ENCODE measurements at regions of chr1 and their contacts with region 1.

Region 1: DNA sequence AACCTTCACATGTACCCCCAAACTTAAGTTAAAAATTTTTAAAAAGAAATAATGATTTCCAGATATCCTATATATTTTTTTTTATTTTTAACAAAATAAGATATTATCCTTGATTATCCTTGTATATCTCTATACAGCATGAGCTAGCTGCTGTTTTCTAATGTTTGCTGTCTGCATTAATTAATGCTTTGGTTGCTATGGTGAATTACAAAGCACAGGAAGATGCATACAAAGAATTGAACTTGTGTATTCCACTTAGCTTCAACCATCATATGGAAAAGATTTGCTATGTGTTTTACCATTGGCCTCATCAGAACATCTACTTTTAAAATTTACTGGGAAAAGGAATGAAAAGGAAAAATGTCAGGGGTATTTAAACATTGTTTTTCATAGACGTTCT is 35.4 kb downstream of the VPS45 start:
- DNase-seq: peak in 1 of 35 experiments; percentile 29
- ATAC-seq: no peak
- H3K4me3 ChIP-seq: no peak overlapping the region
- H3K4me3 Mint-ChIP-seq: no peak overlapping the region
- H3K27ac ChIP-seq: no peak overlapping the region
- H3K27ac Mint-ChIP-seq: peak overlapping the region; percentile 64 to 69
- H3K4me1 ChIP-seq: peaks cover 19 to 39% of the 10 kb centered on the region in 2 experiments
- H3K4me1 Mint-ChIP-seq: peaks cover 57 to 66% (median 58%) of the 10 kb centered on the region in 3 donors
- H3K27me3 ChIP-seq: no peaks in the 10 kb centered on the region
- H3K27me3 Mint-ChIP-seq: no peaks in the 10 kb centered on the region

Region 2: GRCh38 chr1:148347781-148348180 is 1755.2 kb before region 1 on chr1:
- CTCF ChIA-PET with region 1: no interaction called
- POLR2A ChIA-PET with region 1: no interaction called
- DNase-seq: no peak
- ATAC-seq: no peak
- H3K4me3 ChIP-seq: no peak overlapping the region
- H3K4me3 Mint-ChIP-seq: no peak overlapping the region
- H3K27ac ChIP-seq: no peak overlapping the region
- H3K27ac Mint-ChIP-seq: no peak overlapping the region
- H3K4me1 ChIP-seq: no peaks in the 10 kb centered on the region
- H3K4me1 Mint-ChIP-seq: peaks cover 2 to 6% (median 5%) of the 10 kb centered on the region in 3 donors
- H3K27me3 ChIP-seq: peaks cover 3 to 28% of the 10 kb centered on the region in 2 experiments
- H3K27me3 Mint-ChIP-seq: peaks cover 26 to 61% of the 10 kb centered on the region in 2 donors

Region 3: GRCh38 chr1:150149271-150150132 is 46.5 kb after region 1 on chr1 and contains the start of gene PLEKHO1:
- CTCF ChIA-PET with region 1: interaction called in 1 of 2 experiments, 6 read pairs
- POLR2A ChIA-PET with region 1: interaction called, 3 to 11 read pairs
- DNase-seq: peak; percentile 59 to 88 (median 74)
- ATAC-seq: peak; percentile 73 to 76 (median 75)
- H3K4me3 ChIP-seq: peak within 1 kb of the TSS; percentile 87 to 93
- H3K4me3 Mint-ChIP-seq: peak within 1 kb of the TSS; percentile 91 to 98 (median 95)
- H3K27ac ChIP-seq: peak within 1 kb of the TSS; percentile 88
- H3K27ac Mint-ChIP-seq: peak within 1 kb of the TSS; percentile 98 to 99
- H3K4me1 ChIP-seq: peaks cover 17 to 51% of the 10 kb centered on the region in 2 experiments
- H3K4me1 Mint-ChIP-seq: peaks cover 70 to 74% (median 71%) of the 10 kb centered on the region in 3 donors
- H3K27me3 ChIP-seq: no peaks in the 10 kb centered on the region
- H3K27me3 Mint-ChIP-seq: no peaks in the 10 kb centered on the region
- total RNA-seq, gene PLEKHO1: 68.9 to 183 (median 154) TPM

Region 4: DNA sequence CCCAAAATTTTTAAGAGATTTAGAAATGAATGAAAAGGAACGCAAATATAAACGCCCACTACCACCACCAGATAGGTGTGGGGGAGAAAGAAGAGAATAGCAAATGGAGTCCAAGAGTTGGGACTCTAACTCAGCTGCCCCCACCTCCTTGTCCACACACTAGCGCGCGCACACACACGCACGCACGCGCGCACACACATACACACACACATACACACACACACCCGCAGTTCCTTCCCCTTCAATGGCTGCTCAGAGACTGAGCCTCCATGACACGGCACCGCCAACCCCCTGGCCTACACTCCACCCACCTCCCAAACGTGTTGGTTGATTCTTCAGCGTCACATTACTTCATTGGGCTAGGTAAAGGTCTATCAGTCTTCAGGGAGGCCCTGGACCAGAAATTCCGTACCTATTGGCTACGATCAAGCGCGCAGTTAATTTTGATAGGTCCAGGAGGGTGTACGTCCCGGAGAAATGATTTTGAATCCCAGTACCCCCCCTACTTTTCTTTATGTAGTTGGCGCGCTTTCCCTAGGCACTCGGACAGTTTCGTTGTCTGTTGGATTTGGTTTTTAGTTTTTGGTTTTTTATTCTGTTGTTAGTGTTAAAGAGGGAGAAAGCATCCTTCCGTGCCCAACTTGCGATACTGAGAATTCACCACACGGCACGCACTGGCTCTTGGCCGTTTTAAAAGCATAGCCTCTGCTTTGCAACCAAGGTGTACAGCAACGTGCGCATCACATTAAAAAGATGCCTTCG is 133.0 kb after region 1 on chr1 and contains the start of gene ANP32E:
- CTCF ChIA-PET with region 1: no interaction called
- POLR2A ChIA-PET with region 1: no interaction called
- DNase-seq: peak; percentile 80 to 98 (median 94)
- ATAC-seq: peak; percentile 88 to 93 (median 92)
- H3K4me3 ChIP-seq: peak within 1 kb of the TSS; percentile 66 to 98
- H3K4me3 Mint-ChIP-seq: no peak within 1 kb of the TSS
- H3K27ac ChIP-seq: peak within 1 kb of the TSS; percentile 99
- H3K27ac Mint-ChIP-seq: peak within 1 kb of the TSS; percentile 96 to 98
- H3K4me1 ChIP-seq: peaks cover 2 to 13% of the 10 kb centered on the region in 2 experiments
- H3K4me1 Mint-ChIP-seq: peaks cover 16 to 20% (median 19%) of the 10 kb centered on the region in 3 donors
- H3K27me3 ChIP-seq: no peaks in the 10 kb centered on the region
- H3K27me3 Mint-ChIP-seq: no peaks in the 10 kb centered on the region
- total RNA-seq, gene ANP32E: 40.2 to 46.3 (median 44.9) TPM

Region 5: GRCh38 chr1:150869683-150870082 is 766.7 kb after region 1 on chr1:
- CTCF ChIA-PET with region 1: no interaction called
- POLR2A ChIA-PET with region 1: no interaction called
- DNase-seq: peak in 4 of 35 experiments; percentile 1 to 13 (median 6)
- ATAC-seq: peak in 1 of 4 experiments; percentile 64
- H3K4me3 ChIP-seq: no peak overlapping the region
- H3K4me3 Mint-ChIP-seq: no peak overlapping the region
- H3K27ac ChIP-seq: no peak overlapping the region
- H3K27ac Mint-ChIP-seq: no peak overlapping the region
- H3K4me1 ChIP-seq: peaks cover 3 to 6% of the 10 kb centered on the region in 2 experiments
- H3K4me1 Mint-ChIP-seq: peaks cover 49 to 60% (median 60%) of the 10 kb centered on the region in 3 donors
- H3K27me3 ChIP-seq: no peaks in the 10 kb centered on the region
- H3K27me3 Mint-ChIP-seq: no peaks in the 10 kb centered on the region